Activated CD8-positive, alpha-beta T cell treated with anti-CD3 and anti-CD28 coated beads for 36 hours (primary cell): ENCODE measurements at regions of chr14 and their contacts with region 1.

Region 1: GRCh38 chr14:65222440-65222858 is 120.1 kb upstream of the MAX start:
- DNase-seq: peak; percentile 74
- ATAC-seq: peak; percentile 96
- H3K4me3 Mint-ChIP-seq: no peak overlapping the region
- H3K27ac Mint-ChIP-seq: peak overlapping the region; percentile 69
- H3K4me1 Mint-ChIP-seq: peaks cover 22% of the 10 kb centered on the region
- H3K27me3 Mint-ChIP-seq: no peaks in the 10 kb centered on the region
- CTCF ChIP-seq: peak; percentile 95

Region 2: DNA sequence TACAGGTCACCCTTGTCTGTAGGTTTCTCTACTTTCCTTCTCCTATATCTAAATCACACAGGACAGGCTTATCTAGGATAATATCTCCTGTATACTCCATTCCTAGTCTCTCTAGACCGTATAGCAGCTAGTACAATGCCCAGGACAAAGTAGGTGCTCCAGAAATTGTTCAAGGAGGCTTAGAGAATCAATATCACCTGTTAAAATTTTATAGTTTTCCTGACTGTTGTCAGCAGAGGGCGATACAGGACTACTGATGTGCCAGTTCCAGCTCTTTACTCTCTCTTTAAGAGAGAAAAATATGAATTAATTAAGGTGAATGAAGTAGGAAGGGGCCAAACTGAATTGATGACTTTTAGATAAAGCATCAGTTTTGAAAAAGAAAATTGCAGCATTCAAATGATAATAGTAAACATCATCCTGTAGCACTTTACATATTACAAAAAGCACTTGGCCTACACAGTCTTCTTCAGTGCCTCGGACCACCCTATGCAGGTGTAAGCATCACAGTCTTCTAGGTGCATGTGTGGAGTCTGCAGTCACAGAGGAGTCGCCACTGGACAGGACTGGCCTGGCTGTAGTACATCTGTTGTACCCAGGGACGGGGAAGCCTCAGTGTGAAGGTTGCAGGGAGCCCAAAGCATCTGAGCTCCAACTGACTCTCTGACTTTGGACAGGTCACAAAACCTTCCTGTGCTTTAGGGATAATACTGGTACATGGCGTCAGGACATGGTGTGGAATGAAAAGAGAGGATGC is 58.2 kb before region 1 on chr14:
- CTCF ChIA-PET with region 1: interaction called, 11 read pairs
- POLR2A ChIA-PET with region 1: no interaction called
- intact Hi-C with region 1: no loop called
- DNase-seq: peak; percentile 54
- ATAC-seq: peak; percentile 65
- H3K4me3 Mint-ChIP-seq: no peak overlapping the region
- H3K27ac Mint-ChIP-seq: no peak overlapping the region
- H3K4me1 Mint-ChIP-seq: peaks cover 24% of the 10 kb centered on the region
- H3K27me3 Mint-ChIP-seq: no peaks in the 10 kb centered on the region
- CTCF ChIP-seq: peak; percentile 79

Region 3: DNA sequence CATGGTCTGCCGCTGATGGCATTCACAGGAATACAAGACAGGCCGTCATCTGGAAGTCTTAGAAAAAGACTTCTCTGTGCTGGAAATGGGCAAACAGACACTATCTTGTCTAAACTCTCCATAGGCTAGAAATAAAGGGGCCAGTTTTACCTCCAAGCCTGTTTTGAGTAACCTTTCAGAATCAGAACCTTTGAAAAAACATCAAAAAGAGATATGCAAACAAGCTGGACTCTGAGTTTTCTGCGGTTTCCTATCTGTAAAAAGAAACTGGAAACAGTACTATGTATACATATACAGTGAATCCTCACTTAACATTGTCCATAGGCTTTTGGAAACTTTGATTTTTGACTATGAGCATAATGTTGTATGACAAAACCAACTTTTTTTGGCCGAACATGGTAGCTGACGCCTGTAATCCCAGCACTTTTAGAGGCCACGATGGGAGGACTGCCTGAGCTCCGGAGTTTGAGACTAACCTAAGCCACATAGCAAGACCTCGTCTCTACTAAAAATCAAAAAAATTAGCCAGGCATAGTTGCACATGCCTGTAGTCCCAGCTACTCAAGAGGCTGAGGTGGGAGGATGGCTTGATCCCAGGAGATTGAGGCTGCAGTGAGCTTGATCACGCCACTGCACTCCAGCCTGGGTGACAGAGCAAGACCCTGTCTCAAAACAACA is 27.3 kb before region 1 on chr14:
- CTCF ChIA-PET with region 1: no interaction called
- POLR2A ChIA-PET with region 1: no interaction called
- intact Hi-C with region 1: no loop called
- DNase-seq: no peak
- ATAC-seq: no peak
- H3K4me3 Mint-ChIP-seq: no peak overlapping the region
- H3K27ac Mint-ChIP-seq: no peak overlapping the region
- H3K4me1 Mint-ChIP-seq: peaks cover 4% of the 10 kb centered on the region
- H3K27me3 Mint-ChIP-seq: no peaks in the 10 kb centered on the region
- CTCF ChIP-seq: no peak

Region 4: GRCh38 chr14:65478596-65478995 is 256.1 kb after region 1 on chr14:
- CTCF ChIA-PET with region 1: no interaction called
- POLR2A ChIA-PET with region 1: no interaction called
- intact Hi-C with region 1: no loop called
- DNase-seq: no peak
- ATAC-seq: peak; percentile 86
- H3K4me3 Mint-ChIP-seq: no peak overlapping the region
- H3K27ac Mint-ChIP-seq: peak overlapping the region; percentile 51
- H3K4me1 Mint-ChIP-seq: peaks cover 77% of the 10 kb centered on the region
- H3K27me3 Mint-ChIP-seq: no peaks in the 10 kb centered on the region
- CTCF ChIP-seq: no peak